Cardiac septum (tissue), 1 donor: ENCODE measurements at regions of chr11 and their contacts with region 1.

Region 1: DNA sequence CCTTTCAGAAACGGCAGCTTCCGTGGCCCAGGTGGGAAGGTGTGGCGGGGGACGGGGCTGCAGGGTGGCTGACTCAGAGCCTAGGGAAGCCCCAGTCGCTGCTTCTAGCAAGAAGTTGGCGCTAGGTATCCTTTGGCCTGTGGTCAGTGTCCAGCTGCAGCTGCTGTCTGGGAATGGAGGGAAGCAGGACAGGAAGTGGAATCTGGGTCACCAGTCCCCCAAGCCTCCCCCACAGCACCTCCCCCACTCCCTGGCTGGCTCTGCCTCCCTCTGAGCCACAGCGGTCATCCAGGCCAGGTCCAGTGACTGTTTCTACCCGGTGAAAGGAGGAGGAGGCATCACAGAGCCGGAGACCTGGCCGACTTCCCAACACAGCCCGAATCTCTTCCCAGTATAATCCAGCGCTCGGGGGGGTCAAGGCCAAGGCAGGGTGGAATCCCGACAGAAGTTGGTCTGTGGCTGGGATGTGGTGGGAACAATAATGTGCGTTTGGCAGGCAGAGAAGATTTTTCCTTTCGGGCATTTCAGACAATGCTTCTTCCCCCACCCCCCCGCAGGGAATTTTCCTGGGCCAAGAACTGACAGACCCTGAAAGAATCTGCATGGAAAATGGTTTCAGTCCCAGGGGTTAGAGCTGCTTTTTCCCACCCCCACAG is 45.1 kb downstream of the C11orf96 start:
- DNase-seq: peak; percentile 94

Region 2: GRCh38 chr11:43756575-43756974 is 230.9 kb before region 1 on chr11:
- intact Hi-C with region 1: no loop called
- DNase-seq: no peak

Region 3: GRCh38 chr11:43895601-43896000 is 91.9 kb before region 1 on chr11:
- intact Hi-C with region 1: loop called (anchors 5 kb)
- DNase-seq: no peak

Region 4: GRCh38 chr11:43933608-43934551 is 53.6 kb before region 1 on chr11:
- intact Hi-C with region 1: no loop called
- DNase-seq: no peak

Region 5: DNA sequence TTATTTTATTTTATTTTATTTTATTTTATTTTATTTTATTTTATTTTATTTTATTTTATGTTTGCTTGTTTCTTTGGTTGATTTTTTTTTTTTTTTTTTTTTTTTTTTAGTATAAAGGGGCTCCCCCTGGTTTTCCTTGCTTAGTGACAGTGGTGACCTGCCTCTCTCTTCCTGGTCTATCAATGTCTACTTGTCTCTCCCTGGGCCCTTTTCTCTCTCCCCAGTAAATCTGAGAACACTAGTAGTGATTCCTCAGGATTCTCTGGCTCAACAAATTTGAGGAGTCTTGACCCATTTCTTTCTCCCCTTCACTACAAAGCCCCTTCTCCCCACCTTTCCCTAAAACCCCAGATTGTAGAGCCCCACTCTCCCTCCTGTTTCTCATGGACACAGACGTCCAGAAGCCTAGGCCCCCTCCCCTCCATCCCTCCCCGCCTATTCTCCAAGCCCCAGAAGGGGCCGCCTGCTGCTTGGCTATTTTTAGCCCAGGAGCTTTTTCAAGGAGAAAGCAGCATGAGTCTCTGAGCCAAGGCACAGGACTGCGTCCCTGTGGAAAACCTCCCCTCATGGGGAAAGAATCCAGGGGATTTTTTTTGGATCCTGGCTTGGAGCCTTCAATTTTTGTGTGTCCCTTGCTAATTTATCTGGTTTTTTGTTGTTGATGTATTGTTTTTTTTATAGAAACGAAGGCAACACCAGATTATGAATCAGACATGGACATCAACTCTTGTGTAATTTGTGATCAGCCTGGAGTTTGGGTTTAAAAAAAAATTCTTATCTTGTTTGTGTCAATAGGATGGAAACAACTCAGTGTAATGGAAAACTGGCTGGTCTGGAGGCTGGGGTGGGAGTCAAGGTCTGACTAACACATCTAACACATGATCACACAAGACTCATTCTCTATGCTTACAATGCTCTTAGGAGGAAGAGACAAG is 42.7 kb after region 1 on chr11:
- intact Hi-C with region 1: loop called (anchors 1 kb)
- DNase-seq: peak; percentile 85